Prostate gland (tissue), 2 donors: ENCODE measurements at regions of chr10 and their contacts with region 1.

Region 1: GRCh38 chr10:78696791-78697395 is 371.9 kb upstream of the ZMIZ1 start:
- DNase-seq: no peak
- H3K4me3 ChIP-seq: no peak overlapping the region
- H3K27ac ChIP-seq: no peak overlapping the region
- H3K4me1 ChIP-seq: no peaks in the 10 kb centered on the region
- H3K27me3 ChIP-seq: no peaks in the 10 kb centered on the region
- CTCF ChIP-seq: no peak
- POLR2A ChIP-seq: no peak

Region 2: GRCh38 chr10:78634389-78634815 is 62.5 kb before region 1 on chr10:
- intact Hi-C with region 1: no loop called
- DNase-seq: no peak
- H3K4me3 ChIP-seq: no peak overlapping the region
- H3K27ac ChIP-seq: no peak overlapping the region
- H3K4me1 ChIP-seq: no peaks in the 10 kb centered on the region
- H3K27me3 ChIP-seq: no peaks in the 10 kb centered on the region
- CTCF ChIP-seq: no peak
- POLR2A ChIP-seq: no peak

Region 3: DNA sequence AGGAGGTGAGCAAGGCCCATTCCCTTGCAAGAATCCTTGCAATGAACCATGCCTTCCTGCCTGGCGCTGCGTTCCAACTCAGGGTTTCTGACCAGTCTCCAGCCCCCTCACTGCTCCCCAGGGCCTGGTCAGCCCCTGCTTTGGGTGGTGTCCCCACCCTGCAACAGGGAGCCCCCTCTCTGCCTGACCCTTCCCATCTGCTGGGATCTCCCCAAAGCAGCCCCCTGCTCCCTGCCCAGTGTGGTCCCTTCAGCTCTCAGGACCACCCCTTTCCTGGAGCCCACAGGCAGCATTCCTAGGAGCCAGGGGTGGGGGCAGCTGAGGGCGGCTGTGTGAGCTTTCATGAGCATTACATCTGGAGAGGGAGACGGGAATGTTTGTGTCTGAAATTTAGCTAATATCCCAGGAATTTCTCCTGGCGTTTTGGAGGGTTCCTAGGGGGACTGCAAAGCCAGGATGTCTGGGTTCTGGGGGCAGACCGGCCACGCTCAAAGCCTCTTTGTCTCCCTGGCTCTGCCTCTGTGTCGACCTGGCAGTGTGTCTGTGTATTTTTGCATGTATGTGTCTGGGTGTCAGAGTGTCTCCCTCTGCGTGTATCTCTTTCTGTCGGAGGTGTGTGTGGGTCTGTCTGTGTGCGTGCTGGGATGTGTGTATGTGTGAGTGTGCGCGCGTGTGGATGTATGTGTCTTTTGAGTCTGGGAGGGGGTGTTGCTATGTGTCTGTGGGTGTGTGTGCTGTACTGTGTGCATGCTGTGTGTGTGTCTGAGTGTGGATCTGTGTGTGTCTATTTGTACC is 71.3 kb after region 1 on chr10:
- intact Hi-C with region 1: loop called (anchors 5 kb)
- DNase-seq: no peak
- H3K4me3 ChIP-seq: no peak overlapping the region
- H3K27ac ChIP-seq: no peak overlapping the region
- H3K4me1 ChIP-seq: peaks cover 3% of the 10 kb centered on the region
- H3K27me3 ChIP-seq: no peaks in the 10 kb centered on the region
- CTCF ChIP-seq: no peak
- POLR2A ChIP-seq: no peak